SK-N-SH (cell line): ENCODE measurements at regions of chr1 and their contacts with region 1.

Region 1: DNA sequence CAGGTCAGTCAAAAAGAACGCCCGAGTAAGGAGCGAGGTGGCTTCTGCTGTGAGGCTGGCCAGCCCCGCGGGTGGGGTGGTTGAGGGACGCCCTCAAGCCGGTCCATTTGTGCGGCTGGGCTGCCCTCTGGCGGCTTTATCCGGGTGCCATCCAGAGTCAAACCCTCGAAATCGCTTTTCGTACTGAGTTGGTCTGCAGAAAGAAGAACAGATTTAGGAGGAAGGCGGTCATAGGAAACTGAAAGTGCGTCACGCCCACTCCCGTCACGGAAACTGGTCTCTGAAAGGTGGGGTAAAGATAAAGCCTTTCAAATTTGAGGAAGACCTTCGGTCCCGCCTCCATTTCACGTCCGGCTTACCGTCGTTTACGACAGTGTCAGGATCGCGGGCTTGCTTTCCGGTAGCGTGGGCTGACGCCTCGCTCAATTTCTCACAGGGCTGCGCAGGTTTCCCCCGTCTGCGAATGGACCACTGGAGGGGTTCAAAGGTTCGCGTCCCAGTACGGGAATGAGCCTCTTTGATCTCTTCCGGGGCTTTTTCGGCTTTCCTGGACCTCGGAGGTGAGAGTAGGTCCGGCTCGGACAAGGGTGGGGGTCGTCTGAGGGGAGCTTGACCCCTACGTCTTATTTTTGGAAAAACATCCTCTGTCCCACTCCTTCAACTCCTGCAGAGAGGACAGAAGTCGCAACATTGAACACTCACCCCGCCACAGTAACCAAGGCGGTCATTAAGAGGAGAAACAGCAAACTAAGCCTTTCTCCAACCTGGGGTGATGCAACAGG is at the start of gene HAX1:
- DNase-seq: peak; percentile 89
- H3K4me3 ChIP-seq: peak within 1 kb of the TSS; percentile 89 to 91
- H3K27ac ChIP-seq: peak within 1 kb of the TSS; percentile 71 to 89
- H3K4me1 ChIP-seq: peaks cover 0 to 9% of the 10 kb centered on the region in 2 experiments; a peak in 1 of 4 replicates
- H3K27me3 ChIP-seq: no peaks in the 10 kb centered on the region
- CTCF ChIP-seq: peak; percentile 97
- EP300 ChIP-seq: 0 out of 4 replicates have a peak, but pooled peaks of 1 of the 2 experiments have one; percentile 2
- RAD21 ChIP-seq: peak; percentile 79
- polyA plus RNA-seq, gene HAX1: 74.1 and 106 TPM in 2 replicates

Region 2: GRCh38 chr1:154081386-154082126 is 190.9 kb before region 1 on chr1:
- CTCF ChIA-PET with region 1: no interaction called
- POLR2A ChIA-PET with region 1: no interaction called
- DNase-seq: no peak
- H3K4me3 ChIP-seq: no peak overlapping the region
- H3K27ac ChIP-seq: no peak overlapping the region
- H3K4me1 ChIP-seq: no peaks in the 10 kb centered on the region
- H3K27me3 ChIP-seq: peaks cover 5% of the 10 kb centered on the region; the same call in 1 of the 2 replicates
- CTCF ChIP-seq: no peak
- EP300 ChIP-seq: no peak
- RAD21 ChIP-seq: no peak

Region 3: DNA sequence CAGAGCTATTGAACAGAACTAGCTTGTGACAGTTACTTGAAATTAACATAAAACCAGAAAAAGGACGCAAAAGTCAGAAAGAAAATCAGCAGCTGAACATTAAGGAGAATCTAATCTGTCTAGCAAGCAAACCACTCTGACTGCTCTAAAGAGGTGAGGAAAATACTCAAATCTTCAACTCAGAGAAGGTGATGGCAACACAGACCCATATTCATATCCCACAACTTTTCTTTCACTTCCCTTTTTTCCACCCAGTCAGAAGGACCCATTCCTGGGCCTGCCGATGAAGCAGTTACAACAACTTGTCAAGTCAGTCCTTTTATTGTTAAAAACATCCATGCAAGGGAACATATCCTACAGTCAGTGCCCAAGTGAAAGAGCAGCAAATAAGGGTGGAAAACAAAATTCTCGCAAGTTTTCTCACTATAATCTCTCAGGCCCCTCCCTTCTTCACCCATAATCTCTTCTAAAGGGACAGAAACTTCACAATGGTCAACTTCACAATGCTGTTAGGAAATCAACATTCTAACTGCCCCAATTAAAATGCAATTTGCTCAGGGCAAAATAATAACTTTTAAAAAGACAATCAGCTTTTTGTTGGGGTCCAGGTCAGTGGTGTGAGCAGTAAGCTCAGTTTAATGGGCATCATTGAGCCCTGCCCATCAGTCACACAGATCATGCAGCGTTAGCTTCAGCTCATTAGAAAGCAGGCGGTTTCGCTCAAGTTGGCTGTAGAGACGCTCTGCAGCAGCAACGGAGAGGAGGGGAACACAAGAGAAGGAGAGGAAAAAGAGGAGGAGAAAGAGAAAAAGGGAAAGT is 113.9 kb before region 1 on chr1:
- CTCF ChIA-PET with region 1: no interaction called
- POLR2A ChIA-PET with region 1: no interaction called
- DNase-seq: no peak
- H3K4me3 ChIP-seq: no peak overlapping the region
- H3K27ac ChIP-seq: no peak overlapping the region
- H3K4me1 ChIP-seq: no peaks in the 10 kb centered on the region
- H3K27me3 ChIP-seq: no peaks in the 10 kb centered on the region
- CTCF ChIP-seq: no peak
- EP300 ChIP-seq: no peak
- RAD21 ChIP-seq: no peak

Region 4: GRCh38 chr1:154256686-154257085 is 15.7 kb before region 1 on chr1:
- CTCF ChIA-PET with region 1: interaction called, 14 read pairs
- POLR2A ChIA-PET with region 1: interaction called, 3 read pairs
- DNase-seq: no peak
- H3K4me3 ChIP-seq: no peak overlapping the region
- H3K27ac ChIP-seq: no peak overlapping the region
- H3K4me1 ChIP-seq: no peaks in the 10 kb centered on the region
- H3K27me3 ChIP-seq: no peaks in the 10 kb centered on the region
- CTCF ChIP-seq: no peak
- EP300 ChIP-seq: no peak
- RAD21 ChIP-seq: no peak

Region 5: GRCh38 chr1:154290921-154291320 is 18.5 kb after region 1 on chr1:
- CTCF ChIA-PET with region 1: no interaction called
- POLR2A ChIA-PET with region 1: no interaction called
- DNase-seq: no peak
- H3K4me3 ChIP-seq: no peak overlapping the region
- H3K27ac ChIP-seq: no peak overlapping the region
- H3K4me1 ChIP-seq: no peaks in the 10 kb centered on the region
- H3K27me3 ChIP-seq: no peaks in the 10 kb centered on the region
- CTCF ChIP-seq: no peak
- EP300 ChIP-seq: no peak
- RAD21 ChIP-seq: no peak